ENCODE measurements at regions of chr17 and their contacts with region 1.

Region 1: DNA sequence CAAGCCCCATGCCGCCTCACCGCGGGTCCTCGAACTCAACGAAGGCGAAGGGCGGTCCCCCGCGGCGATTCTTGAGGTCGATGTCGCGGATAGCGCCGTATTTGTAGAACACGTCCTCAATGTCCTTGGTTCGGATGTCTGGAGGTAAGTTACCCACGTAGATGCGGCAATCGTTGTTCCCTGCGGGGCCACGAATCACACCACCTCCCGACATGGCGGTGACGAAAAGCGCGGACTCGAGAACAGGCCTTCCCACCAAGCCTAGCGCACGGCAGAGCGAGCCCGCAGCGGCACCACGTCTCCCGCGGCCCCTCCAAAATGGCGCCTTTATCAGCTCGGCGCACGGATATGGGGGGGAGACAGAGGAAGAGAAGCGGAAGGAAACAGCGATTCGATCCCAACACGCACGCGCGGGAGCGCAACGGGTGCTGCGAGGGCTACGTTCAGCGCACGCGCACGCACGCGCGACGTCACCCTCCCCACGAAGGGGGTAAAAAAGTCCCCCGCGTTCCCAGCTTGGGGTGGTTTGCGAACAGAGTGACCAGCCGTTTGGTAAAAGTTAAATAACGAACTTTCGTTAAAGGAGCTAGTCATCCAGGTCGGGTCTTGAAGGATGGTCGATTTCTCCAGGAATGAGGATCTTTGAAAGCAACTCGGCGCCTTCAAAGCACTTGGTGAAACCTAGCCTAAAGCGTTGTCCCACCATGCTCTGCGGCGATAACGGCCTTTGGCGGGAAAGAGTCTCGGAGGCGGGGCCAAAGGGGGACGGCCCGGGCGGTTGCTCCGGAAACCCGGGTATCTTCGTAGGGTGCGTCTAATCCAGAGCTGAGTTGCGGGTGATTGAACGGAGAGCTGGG is at the start of gene SRSF1:
- DNase-seq: peak; percentile 97 to 100
- ATAC-seq: peak; percentile 84 to 94 (median 85)
- H3K4me3 ChIP-seq: peak within 1 kb of the TSS; percentile 82
- H3K4me3 Mint-ChIP-seq: peak within 1 kb of the TSS; percentile 99
- H3K27ac ChIP-seq: peak within 1 kb of the TSS; percentile 83
- H3K27ac Mint-ChIP-seq: peak within 1 kb of the TSS; percentile 99
- H3K4me1 ChIP-seq: peaks cover 16% of the 10 kb centered on the region
- H3K4me1 Mint-ChIP-seq: peaks cover 50 to 51% of the 10 kb centered on the region in 2 donors
- H3K27me3 ChIP-seq: no peaks in the 10 kb centered on the region
- H3K27me3 Mint-ChIP-seq: no peaks in the 10 kb centered on the region
- CTCF ChIP-seq: no peak
- total RNA-seq, gene SRSF1: 125 to 157 (median 137) TPM

Region 2: DNA sequence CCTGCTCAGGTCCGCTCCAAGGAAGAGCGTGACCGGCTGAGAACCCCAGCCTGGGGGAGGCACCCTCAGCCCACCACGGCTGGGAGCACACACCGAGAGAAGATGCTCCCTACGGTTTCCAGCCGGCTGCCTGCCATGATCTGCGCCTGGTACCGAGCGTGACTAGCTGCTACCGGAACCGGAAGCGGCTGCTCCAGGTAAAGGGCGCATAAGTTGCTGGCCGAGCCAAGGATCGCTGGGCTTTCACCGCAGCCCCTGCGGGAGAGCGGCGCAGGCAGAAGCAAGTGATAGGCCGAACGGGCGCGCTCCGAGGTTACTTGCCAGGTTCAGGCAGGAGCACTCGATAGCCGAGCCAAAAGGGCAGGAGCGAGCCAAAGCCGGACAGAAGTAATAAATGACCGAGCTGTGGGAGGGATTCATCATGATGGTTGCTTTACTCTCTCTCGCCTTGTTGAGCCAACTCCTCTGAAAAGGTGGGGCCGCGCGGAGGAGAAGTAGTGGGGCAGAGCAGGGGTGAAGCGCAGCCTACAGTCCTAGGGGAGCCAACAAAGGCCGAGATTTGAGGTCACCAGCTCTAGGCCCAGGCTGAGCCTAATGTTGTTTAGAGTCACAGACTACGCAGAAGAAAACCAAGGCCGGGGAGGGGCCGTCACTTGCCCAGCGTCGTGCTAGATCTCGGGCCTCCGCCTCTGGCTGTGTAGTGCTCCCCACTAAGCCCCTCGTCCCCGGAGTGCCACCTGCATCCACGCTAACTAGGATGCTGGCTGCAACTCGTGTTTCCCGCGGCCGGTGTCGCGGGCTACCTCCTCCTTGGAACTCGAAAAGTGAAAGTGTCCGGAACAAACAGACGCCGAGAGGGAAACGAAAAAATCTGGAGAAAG is 157.0 kb before region 1 on chr17 and contains the start of gene MRPS23:
- intact Hi-C with region 1: loop called (anchors 1 kb)
- DNase-seq: peak; percentile 90 to 98
- ATAC-seq: peak; percentile 93 to 99 (median 96)
- H3K4me3 ChIP-seq: peak within 1 kb of the TSS; percentile 77
- H3K4me3 Mint-ChIP-seq: peak within 1 kb of the TSS; percentile 99
- H3K27ac ChIP-seq: peak within 1 kb of the TSS; percentile 91
- H3K27ac Mint-ChIP-seq: peak within 1 kb of the TSS; percentile 98 to 99
- H3K4me1 ChIP-seq: peaks cover 18% of the 10 kb centered on the region
- H3K4me1 Mint-ChIP-seq: peaks cover 33 to 36% of the 10 kb centered on the region in 2 donors
- H3K27me3 ChIP-seq: no peaks in the 10 kb centered on the region
- H3K27me3 Mint-ChIP-seq: no peaks in the 10 kb centered on the region
- CTCF ChIP-seq: no peak
- total RNA-seq, gene MRPS23: 12.8 to 17.3 (median 17.2) TPM

Region 3: DNA sequence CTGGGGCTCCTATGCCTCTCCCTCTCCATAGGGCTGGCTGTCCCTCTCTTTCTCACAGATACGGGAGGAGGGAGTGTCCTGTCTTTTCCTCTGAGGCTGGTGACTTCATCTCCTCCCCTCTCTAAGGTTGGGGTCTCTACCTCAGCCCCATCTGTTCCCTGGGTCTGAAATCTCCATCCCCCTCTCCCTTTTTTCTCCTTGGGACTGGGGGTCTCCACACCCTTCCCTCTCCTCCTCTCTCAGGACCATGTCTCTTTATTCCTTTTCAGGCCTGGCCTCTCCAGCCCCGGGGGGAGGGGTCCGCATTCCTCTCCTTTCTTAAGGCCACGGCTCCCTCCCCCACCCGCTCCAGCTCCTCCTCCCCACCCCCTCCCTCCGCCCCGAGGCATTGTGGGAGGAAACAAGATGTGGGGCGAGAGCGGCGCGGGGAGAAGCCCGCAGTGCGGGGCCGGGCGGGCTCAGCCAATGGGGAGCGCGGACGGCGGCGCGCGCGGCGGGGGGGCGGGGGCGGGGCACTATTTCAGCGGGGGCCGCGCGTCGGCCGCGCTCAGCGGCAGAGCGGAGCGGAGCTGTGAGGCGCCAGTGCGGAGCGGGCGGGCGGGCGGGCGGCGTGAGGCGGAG is 75.8 kb after region 1 on chr17 and contains the start of gene DYNLL2:
- intact Hi-C with region 1: loop called (anchors 5 kb)
- DNase-seq: peak; percentile 73 to 93
- ATAC-seq: peak; percentile 78 to 90 (median 85)
- H3K4me3 ChIP-seq: peak within 1 kb of the TSS; percentile 65
- H3K4me3 Mint-ChIP-seq: peak within 1 kb of the TSS; percentile 88
- H3K27ac ChIP-seq: peak within 1 kb of the TSS; percentile 82
- H3K27ac Mint-ChIP-seq: peak within 1 kb of the TSS; percentile 66 to 84
- H3K4me1 ChIP-seq: peaks cover 22% of the 10 kb centered on the region
- H3K4me1 Mint-ChIP-seq: peaks cover 29 to 45% of the 10 kb centered on the region in 2 donors
- H3K27me3 ChIP-seq: no peaks in the 10 kb centered on the region
- H3K27me3 Mint-ChIP-seq: peaks cover 0 to 8% of the 10 kb centered on the region in 2 donors
- CTCF ChIP-seq: no peak
- total RNA-seq, gene DYNLL2: 25.6 to 37.0 (median 36.1) TPM

Region 4: DNA sequence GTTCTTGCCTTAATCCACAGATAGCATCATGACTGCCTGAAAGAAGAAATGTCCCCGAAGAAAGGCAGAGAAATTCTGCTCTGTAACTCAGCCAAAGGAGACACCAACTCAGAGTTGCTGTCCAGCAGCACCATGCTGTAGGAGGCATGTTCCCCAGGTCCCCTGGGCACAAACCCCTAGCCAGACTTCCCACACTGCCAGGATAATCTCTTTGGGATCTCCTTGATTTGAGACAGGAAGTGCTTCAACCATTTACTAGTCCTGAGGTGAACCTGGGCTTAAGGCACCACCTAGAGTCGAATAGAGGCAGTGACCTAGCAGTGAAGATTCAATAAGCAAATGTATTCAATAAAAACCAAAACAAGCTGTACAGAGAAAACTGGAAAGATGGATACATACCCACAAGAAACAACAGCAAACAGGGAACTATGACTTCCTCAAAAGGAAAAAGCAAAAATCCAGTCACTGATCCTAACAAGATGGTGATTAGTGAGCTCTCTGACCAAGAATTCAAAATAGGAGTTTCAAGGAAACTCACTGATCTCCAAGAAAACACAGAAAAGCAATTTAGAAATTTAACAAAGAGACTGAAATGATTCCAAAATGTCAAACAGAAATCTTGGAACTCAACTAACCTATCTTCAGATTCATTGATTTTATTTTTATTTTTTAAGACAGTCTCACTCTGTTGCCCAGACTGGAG is 165.4 kb after region 1 on chr17:
- intact Hi-C with region 1: loop called (anchors 1 kb)
- DNase-seq: peak in 1 of 2 donors; percentile 82
- ATAC-seq: peak; percentile 76 to 87 (median 86)
- H3K4me3 ChIP-seq: no peak overlapping the region
- H3K4me3 Mint-ChIP-seq: peak overlapping the region; percentile 35
- H3K27ac ChIP-seq: no peak overlapping the region
- H3K27ac Mint-ChIP-seq: peak overlapping the region; percentile 81 to 85
- H3K4me1 ChIP-seq: peaks cover 30% of the 10 kb centered on the region
- H3K4me1 Mint-ChIP-seq: peaks cover 36 to 41% of the 10 kb centered on the region in 2 donors
- H3K27me3 ChIP-seq: no peaks in the 10 kb centered on the region
- H3K27me3 Mint-ChIP-seq: peaks cover 4 to 18% of the 10 kb centered on the region in 2 donors
- CTCF ChIP-seq: peak; percentile 67

Region 5: DNA sequence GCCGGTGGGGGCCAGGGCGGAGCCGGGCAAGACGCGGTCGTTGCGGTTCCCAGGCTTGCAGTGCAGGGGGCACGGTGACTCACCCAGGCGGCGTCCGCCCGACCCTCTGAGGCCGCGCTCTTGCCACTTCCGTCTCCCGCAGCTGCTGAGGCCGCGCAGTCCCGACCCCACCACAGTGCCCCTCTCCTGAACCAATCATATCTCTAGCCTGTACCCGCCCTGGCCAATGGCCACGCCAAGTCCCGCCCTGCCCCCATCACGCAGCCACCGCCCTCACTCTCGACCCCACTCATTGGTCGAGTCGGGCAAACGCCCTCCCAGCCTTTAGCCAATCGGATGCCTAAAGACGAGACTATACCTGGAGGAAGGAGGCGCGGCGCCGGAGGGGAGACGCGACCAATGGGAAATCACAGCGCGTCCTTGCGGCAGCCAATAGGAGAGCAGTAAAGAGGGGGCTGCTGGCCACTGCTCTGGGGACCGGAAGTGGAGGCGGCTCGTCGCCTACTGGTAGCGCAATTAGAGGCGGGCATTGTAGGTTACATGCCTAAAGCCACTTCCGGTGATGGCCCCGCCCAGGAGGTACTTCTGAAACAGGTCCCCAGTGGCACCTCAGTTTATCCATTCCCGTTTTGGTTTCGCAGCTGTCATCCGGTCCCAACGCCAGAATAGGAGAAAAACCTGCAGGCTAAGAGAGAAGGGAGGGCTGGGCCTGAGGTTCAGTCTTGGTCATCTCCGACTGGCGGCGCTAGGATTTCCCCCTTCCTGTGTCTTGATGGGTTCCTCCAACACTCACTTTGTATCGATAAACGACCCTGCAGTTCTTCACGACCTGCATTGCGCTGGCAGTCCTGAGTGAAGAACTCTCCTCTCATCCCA is 510.8 kb after region 1 on chr17:
- intact Hi-C with region 1: loop called (anchors 10 kb)
- DNase-seq: peak; percentile 98 to 100
- ATAC-seq: peak; percentile 80 to 92 (median 81)
- H3K4me3 ChIP-seq: peak overlapping the region; percentile 68
- H3K4me3 Mint-ChIP-seq: peak overlapping the region; percentile 97
- H3K27ac ChIP-seq: peak overlapping the region; percentile 66
- H3K27ac Mint-ChIP-seq: peak overlapping the region; percentile 91 to 96
- H3K4me1 ChIP-seq: peaks cover 43% of the 10 kb centered on the region
- H3K4me1 Mint-ChIP-seq: peaks cover 45 to 55% of the 10 kb centered on the region in 2 donors
- H3K27me3 ChIP-seq: no peaks in the 10 kb centered on the region
- H3K27me3 Mint-ChIP-seq: peaks cover 0 to 3% of the 10 kb centered on the region in 2 donors
- CTCF ChIP-seq: no peak